B cell (primary cell): ENCODE measurements at regions of chr20 and their contacts with region 1.

Region 1: DNA sequence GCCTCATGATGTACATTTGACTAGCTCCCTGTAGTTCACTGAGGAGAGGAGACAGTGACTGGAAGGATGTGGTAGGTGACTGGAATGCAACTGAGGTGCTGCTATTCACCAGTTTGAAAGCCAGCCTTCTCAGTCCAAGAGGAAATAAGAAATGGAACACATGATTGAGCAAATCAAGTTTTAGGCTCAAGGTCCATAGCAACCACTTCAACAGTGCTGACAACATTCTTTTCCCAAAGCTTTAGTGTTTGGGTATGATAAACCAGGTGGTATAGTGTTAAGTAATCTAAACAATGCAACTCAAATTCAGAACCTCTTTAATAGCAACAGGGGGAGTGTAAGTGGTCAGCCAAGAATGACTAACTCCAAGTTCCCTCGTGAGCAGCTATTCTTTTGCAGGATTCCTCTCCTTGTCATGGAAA is 9.2 kb downstream of the ZHX3 start:
- DNase-seq: no peak
- ATAC-seq: no peak
- H3K4me3 ChIP-seq: no peak overlapping the region
- H3K4me3 Mint-ChIP-seq: no peak overlapping the region
- H3K27ac ChIP-seq: no peak overlapping the region
- H3K27ac Mint-ChIP-seq: no peak overlapping the region
- H3K4me1 ChIP-seq: peaks cover 19 to 22% of the 10 kb centered on the region in 2 donors
- H3K4me1 Mint-ChIP-seq: peaks cover 28% of the 10 kb centered on the region
- H3K27me3 ChIP-seq: no peaks in the 10 kb centered on the region
- H3K27me3 Mint-ChIP-seq: no peaks in the 10 kb centered on the region
- CTCF ChIP-seq: no peak

Region 2: GRCh38 chr20:41222296-41222695 is 86.0 kb before region 1 on chr20:
- CTCF ChIA-PET with region 1: no interaction called
- POLR2A ChIA-PET with region 1: no interaction called
- intact Hi-C with region 1: no loop called
- DNase-seq: no peak
- ATAC-seq: no peak
- H3K4me3 ChIP-seq: no peak overlapping the region
- H3K4me3 Mint-ChIP-seq: no peak overlapping the region
- H3K27ac ChIP-seq: no peak overlapping the region
- H3K27ac Mint-ChIP-seq: no peak overlapping the region
- H3K4me1 ChIP-seq: no peaks in the 10 kb centered on the region
- H3K4me1 Mint-ChIP-seq: peaks cover 4% of the 10 kb centered on the region
- H3K27me3 ChIP-seq: no peaks in the 10 kb centered on the region
- H3K27me3 Mint-ChIP-seq: no peaks in the 10 kb centered on the region
- CTCF ChIP-seq: no peak

Region 3: DNA sequence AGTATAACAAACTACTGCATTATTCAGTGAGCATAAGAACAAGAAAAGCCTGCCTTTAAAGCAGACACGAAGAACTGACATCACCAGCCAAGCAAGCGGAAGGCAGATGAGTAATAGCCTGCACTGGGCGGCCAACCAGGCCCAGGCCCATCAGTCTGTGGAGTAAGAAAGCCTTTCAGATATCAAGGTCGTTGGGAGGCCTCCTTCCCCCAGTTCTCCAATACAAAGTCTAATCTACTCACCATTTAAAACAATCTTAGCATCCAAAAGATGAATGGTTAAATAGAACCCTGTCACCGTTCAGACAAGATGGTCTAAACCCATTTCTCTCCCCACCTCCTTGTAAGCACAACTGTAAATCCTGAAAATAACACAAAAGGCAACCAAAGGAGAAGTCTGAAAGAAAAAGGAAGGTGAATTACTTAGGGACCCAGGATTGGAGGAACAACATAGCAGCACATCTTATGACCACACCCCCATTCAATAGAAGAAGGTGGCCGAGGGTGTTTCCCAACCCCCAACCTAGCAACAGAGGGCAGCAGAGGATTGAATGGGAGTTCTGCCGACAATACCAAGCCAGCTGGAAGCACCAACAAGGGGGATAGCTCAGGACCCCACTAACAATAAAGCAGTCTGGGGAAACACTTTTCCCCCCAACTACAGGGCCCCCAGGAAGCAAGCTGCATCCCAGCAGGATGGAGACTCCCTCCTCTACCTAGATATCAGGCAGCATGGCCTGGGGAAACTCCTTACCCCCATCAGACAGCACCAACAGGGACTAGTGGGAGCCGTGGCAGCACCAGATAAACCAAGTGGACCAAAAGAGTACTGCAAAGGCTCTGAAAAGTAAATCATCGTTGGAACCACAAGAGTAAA is 58.7 kb before region 1 on chr20:
- CTCF ChIA-PET with region 1: interaction called, 6 read pairs
- POLR2A ChIA-PET with region 1: no interaction called
- intact Hi-C with region 1: loop called (anchors 5 kb)
- DNase-seq: peak; percentile 39
- ATAC-seq: peak; percentile 77
- H3K4me3 ChIP-seq: peak overlapping the region in 1 of 5 experiments; percentile 40
- H3K4me3 Mint-ChIP-seq: peak overlapping the region; percentile 67
- H3K27ac ChIP-seq: peak overlapping the region; percentile 42 to 49
- H3K27ac Mint-ChIP-seq: peak overlapping the region; percentile 85
- H3K4me1 ChIP-seq: peaks cover 53 to 57% of the 10 kb centered on the region in 2 donors
- H3K4me1 Mint-ChIP-seq: peaks cover 52% of the 10 kb centered on the region
- H3K27me3 ChIP-seq: no peaks in the 10 kb centered on the region
- H3K27me3 Mint-ChIP-seq: no peaks in the 10 kb centered on the region
- CTCF ChIP-seq: no peak